Panc1 (cell line): ENCODE measurements at regions of chr2 and their contacts with region 1.

Region 1: GRCh38 chr2:179729961-179730360 is 131.5 kb downstream of the ZNF385B start:
- DNase-seq: no peak
- ATAC-seq: no peak
- H3K4me3 ChIP-seq: no peak overlapping the region
- H3K27ac ChIP-seq: no peak overlapping the region
- H3K4me1 ChIP-seq: no peaks in the 10 kb centered on the region
- H3K27me3 ChIP-seq: peaks cover 2% of the 10 kb centered on the region; the same call in 1 of the 2 replicates
- CTCF ChIP-seq: no peak

Region 2: GRCh38 chr2:179669196-179669595 is 60.8 kb before region 1 on chr2:
- CTCF ChIA-PET with region 1: no interaction called
- POLR2A ChIA-PET with region 1: no interaction called
- in situ Hi-C with region 1: no loop called
- intact Hi-C with region 1: loop called (anchors 5 kb)
- DNase-seq: no peak
- ATAC-seq: no peak
- H3K4me3 ChIP-seq: no peak overlapping the region
- H3K27ac ChIP-seq: no peak overlapping the region
- H3K4me1 ChIP-seq: no peaks in the 10 kb centered on the region
- H3K27me3 ChIP-seq: no peaks in the 10 kb centered on the region
- CTCF ChIP-seq: no peak